Activated CD8-positive, alpha-beta T cell treated with anti-CD3 and anti-CD28 coated beads for 36 hours (primary cell): ENCODE measurements at regions of chr1 and their contacts with region 1.

Region 1: DNA sequence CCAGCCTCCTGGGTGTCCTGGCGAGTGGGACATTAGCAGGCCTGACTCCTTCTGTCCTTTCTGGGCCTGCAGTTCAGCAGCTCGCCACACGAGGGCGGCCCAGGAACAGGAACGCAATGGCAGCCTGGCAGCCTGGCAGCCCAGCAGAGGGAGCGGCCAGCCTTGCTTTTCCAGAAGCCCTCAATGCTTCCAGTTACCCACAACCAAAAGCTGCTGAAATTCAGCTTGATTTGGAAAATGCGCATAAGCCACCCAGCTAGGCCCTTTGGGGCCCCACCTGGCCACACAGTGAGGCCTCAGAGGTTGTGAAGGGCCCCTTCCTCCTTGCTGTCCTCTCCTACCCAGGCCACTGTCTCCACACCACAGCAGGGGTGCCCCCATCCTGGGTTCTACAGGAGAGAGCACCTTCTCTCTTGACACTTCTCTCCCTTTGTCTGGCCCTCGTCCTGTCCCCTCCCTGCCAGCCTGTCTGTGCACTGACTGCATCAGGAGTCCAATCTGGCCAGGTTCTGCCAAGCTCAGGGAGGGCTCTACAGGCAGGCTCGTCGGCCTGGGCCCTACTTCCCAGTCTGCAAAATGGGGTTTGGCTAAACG is 103.4 kb upstream of the VAMP3 start:
- DNase-seq: peak; percentile 91
- ATAC-seq: peak; percentile 86
- H3K4me3 Mint-ChIP-seq: no peak overlapping the region
- H3K27ac Mint-ChIP-seq: peak overlapping the region; percentile 64
- H3K4me1 Mint-ChIP-seq: peaks cover 4% of the 10 kb centered on the region
- H3K27me3 Mint-ChIP-seq: peaks cover 5% of the 10 kb centered on the region
- CTCF ChIP-seq: peak; percentile 98

Region 2: GRCh38 chr1:7646981-7647901 is 20.5 kb before region 1 on chr1:
- CTCF ChIA-PET with region 1: interaction called, 16 read pairs
- POLR2A ChIA-PET with region 1: no interaction called
- intact Hi-C with region 1: no loop called
- DNase-seq: peak; percentile 70
- ATAC-seq: peak; percentile 55
- H3K4me3 Mint-ChIP-seq: no peak overlapping the region
- H3K27ac Mint-ChIP-seq: no peak overlapping the region
- H3K4me1 Mint-ChIP-seq: no peaks in the 10 kb centered on the region
- H3K27me3 Mint-ChIP-seq: no peaks in the 10 kb centered on the region
- CTCF ChIP-seq: peak; percentile 89

Region 3: DNA sequence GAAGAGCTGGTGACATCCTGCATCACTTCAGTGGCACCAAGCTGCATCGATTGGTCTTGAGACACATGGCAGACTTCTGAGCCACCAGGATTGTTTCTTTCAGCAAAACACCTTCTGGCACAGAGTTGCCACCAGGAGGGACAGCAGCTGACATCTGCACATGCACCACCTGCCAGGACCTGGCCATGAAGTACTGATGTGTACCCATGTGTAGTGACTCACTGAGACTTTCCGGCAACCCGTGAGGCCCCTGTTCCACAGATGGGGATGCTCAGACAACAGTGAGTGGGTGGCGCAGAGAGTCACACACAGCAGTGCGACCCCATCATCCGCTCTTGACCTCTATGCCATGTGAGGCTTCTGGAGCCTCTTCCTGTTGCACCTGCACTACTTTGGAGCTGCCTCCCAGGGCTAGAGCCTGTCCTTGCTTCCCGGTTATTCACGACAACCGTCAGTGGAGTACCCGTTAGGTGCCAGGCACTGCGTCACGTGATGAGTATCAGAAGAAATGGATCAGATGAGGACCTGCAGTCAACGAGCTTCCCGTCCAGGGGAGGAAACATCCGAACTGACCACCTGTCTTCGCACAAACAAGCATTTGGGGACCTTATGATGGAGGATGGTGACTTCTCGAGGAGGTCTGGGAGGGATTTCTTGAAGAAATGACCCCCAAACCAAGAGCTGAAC is 22.9 kb after region 1 on chr1:
- CTCF ChIA-PET with region 1: interaction called, 21 read pairs
- POLR2A ChIA-PET with region 1: no interaction called
- intact Hi-C with region 1: no loop called
- DNase-seq: no peak
- ATAC-seq: no peak
- H3K4me3 Mint-ChIP-seq: no peak overlapping the region
- H3K27ac Mint-ChIP-seq: no peak overlapping the region
- H3K4me1 Mint-ChIP-seq: no peaks in the 10 kb centered on the region
- H3K27me3 Mint-ChIP-seq: peaks cover 11% of the 10 kb centered on the region
- CTCF ChIP-seq: no peak

Region 4: DNA sequence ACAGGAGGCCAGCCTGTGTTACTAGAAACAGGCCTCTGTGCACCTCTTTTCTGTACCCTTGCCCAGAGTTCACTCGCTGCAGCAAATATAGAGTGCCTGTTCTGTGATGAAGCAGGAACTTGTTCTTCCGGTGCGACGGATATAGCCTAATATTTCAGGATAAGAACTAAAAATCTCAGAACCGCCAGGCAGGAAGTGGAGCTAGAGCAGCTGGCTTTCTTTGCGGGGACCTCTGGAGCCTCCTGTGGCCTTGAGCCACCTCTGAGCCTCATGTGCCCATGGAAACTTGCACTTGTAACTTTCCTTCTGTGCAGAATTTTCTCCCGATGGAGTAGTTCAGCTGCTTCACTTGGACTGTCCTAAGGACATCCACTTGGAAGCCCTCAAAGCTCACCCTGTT is 58.9 kb after region 1 on chr1:
- CTCF ChIA-PET with region 1: interaction called, 21 read pairs
- POLR2A ChIA-PET with region 1: no interaction called
- intact Hi-C with region 1: no loop called
- DNase-seq: no peak
- ATAC-seq: no peak
- H3K4me3 Mint-ChIP-seq: no peak overlapping the region
- H3K27ac Mint-ChIP-seq: no peak overlapping the region
- H3K4me1 Mint-ChIP-seq: peaks cover 2% of the 10 kb centered on the region
- H3K27me3 Mint-ChIP-seq: peaks cover 7% of the 10 kb centered on the region
- CTCF ChIP-seq: no peak

Region 5: GRCh38 chr1:7752512-7753417 is 85.0 kb after region 1 on chr1:
- CTCF ChIA-PET with region 1: interaction called, 589 read pairs
- POLR2A ChIA-PET with region 1: interaction called, 6 read pairs
- intact Hi-C with region 1: loop called (anchors 1 kb)
- DNase-seq: peak; percentile 70
- ATAC-seq: peak; percentile 60
- H3K4me3 Mint-ChIP-seq: peak overlapping the region; percentile 47
- H3K27ac Mint-ChIP-seq: no peak overlapping the region
- H3K4me1 Mint-ChIP-seq: peaks cover 29% of the 10 kb centered on the region
- H3K27me3 Mint-ChIP-seq: peaks cover 10% of the 10 kb centered on the region
- CTCF ChIP-seq: peak; percentile 88

Region 6: DNA sequence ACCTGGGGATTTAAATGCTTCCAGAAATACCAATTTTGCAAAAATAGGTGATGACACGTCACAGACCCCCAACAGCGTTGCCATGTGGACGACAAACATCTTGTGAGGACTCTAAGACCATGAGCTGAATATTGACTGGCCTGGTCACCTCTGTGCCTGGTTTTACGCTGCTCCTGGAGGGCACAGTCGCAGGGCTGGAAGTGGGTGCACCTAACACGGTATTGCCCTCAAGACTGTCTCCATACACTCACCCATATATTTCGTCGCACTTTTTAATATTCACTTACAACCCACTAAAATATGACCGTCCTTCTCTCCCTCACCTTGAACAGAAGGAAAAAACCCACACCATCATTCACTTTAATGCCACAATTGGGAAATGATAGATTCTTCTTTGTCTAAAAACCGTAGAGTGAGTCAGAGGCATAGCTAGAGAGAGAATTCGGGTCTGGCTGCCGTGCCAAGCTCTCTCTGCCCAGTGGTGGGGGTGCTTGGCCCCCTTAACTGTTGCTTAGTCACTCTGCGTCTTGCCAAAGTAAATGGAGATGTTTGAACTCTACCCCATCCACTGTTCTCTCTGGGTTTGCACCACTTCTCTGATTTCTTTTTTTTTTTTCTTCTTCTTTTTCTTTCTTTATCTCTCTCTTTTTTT is 225.9 kb after region 1 on chr1:
- CTCF ChIA-PET with region 1: no interaction called
- POLR2A ChIA-PET with region 1: no interaction called
- intact Hi-C with region 1: loop called (anchors 10 kb)
- DNase-seq: no peak
- ATAC-seq: no peak
- H3K4me3 Mint-ChIP-seq: no peak overlapping the region
- H3K27ac Mint-ChIP-seq: no peak overlapping the region
- H3K4me1 Mint-ChIP-seq: peaks cover 3% of the 10 kb centered on the region
- H3K27me3 Mint-ChIP-seq: no peaks in the 10 kb centered on the region
- CTCF ChIP-seq: no peak